PC-3 (cell line): ENCODE measurements at regions of chr7 and their contacts with region 1.

Region 1: DNA sequence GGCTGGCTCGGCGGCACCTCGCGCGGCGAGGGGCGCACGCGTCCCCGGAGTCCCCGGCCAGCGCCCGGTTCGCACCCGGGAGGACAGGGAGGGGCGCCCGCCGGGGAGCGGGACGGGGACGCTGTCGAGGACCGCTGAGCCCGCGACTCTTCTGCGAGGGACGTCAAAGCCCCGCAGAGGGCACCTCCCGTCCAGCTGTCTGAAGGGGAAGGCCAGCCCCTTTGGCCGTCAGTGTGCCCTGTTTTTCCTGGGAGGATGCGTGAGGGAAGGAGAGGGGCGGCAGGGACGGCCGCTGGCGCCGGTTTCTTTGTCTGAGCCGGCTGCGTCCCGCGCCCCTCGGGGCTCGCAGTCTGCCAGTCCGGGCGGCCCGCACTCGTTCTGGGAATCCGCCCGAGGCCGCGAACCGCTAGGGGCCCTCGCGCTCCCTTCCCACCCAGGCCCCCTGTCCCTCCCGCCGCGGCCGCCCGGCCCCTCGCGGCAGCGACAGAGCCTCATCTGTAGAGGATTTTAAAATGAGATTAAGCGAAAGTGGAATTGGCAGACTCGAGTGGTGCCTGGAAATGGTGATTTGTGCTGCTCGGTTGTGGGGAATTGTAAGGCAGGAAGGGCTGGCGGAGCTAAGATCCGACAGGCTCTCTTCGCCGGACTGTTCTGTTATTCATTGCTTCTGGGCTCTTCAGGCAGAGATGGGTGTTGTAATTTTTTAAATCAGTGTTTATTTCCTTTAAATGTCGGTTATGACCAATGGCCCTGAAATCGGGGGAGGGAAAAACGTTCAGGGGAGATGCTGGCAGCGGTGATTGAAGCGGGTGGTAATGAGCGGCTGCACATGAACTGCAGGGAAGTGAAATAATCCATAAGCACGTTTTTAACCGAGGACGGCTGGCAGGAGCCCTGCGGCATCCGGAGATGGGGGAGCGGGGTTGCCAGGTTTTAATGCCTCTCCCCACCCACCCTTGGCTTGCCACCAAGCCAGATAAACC is 618 bp upstream of the RELN start:
- DNase-seq: peak; percentile 11
- ATAC-seq: peak; percentile 50
- H3K4me3 ChIP-seq: peak overlapping the region; percentile 67
- H3K27ac ChIP-seq: no peak overlapping the region
- H3K4me1 ChIP-seq: no peaks in the 10 kb centered on the region
- H3K27me3 ChIP-seq: peaks cover 43% of the 10 kb centered on the region
- CTCF ChIP-seq: peak; percentile 21; the same call in 1 of the 2 replicates

Region 2: DNA sequence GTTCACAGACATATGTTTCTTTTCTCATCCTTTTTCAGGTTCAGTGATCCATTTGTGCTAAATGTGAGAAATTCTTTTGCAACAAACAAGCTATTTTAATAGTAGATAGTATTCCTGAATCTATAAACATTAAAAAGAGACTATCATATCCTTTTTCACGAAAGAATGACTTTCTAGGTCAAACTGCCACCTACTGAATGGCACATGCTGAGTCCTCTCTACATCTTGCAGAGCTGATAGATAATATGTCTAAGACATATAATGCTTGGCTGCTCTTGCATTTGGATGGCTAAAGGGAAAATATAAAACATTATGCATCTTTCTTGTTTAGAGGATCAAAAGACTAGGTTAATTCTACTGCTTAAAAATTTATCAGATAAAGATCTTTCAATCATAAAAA is 429.9 kb before region 1 on chr7:
- CTCF ChIA-PET with region 1: no interaction called
- POLR2A ChIA-PET with region 1: no interaction called
- intact Hi-C with region 1: no loop called
- DNase-seq: no peak
- ATAC-seq: no peak
- H3K4me3 ChIP-seq: no peak overlapping the region
- H3K27ac ChIP-seq: no peak overlapping the region
- H3K4me1 ChIP-seq: no peaks in the 10 kb centered on the region
- H3K27me3 ChIP-seq: no peaks in the 10 kb centered on the region
- CTCF ChIP-seq: no peak

Region 3: GRCh38 chr7:103866919-103867318 is 123.2 kb before region 1 on chr7:
- CTCF ChIA-PET with region 1: no interaction called
- POLR2A ChIA-PET with region 1: no interaction called
- intact Hi-C with region 1: loop called (anchors 10 kb)
- DNase-seq: peak; percentile 7
- ATAC-seq: peak; percentile 81
- H3K4me3 ChIP-seq: no peak overlapping the region
- H3K27ac ChIP-seq: no peak overlapping the region
- H3K4me1 ChIP-seq: no peaks in the 10 kb centered on the region
- H3K27me3 ChIP-seq: peaks cover 22% of the 10 kb centered on the region; the same call in 1 of the 2 replicates
- CTCF ChIP-seq: no peak

Region 4: GRCh38 chr7:103951311-103951710 is 38.8 kb before region 1 on chr7:
- CTCF ChIA-PET with region 1: no interaction called
- POLR2A ChIA-PET with region 1: no interaction called
- intact Hi-C with region 1: no loop called
- DNase-seq: no peak
- ATAC-seq: no peak
- H3K4me3 ChIP-seq: no peak overlapping the region
- H3K27ac ChIP-seq: no peak overlapping the region
- H3K4me1 ChIP-seq: no peaks in the 10 kb centered on the region
- H3K27me3 ChIP-seq: peaks cover 15% of the 10 kb centered on the region
- CTCF ChIP-seq: no peak

Region 5: DNA sequence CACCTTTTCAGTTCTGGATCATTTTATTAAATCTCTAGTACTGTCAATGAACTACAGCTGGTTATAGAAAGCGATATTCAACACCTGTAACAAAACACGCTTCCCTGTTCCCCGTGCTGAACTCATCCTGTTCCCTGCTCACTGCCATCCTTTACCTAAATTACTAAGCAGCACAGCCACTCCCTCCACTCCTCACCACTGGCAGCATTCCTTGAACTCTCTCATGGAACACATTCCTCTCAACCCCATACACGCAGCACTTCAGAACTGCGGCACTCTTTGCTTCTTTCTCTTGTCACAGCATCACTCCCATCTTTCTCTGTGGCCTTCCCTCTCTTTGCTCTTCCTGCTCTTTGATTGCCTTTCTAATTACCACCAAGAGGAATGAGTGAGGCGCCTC is 28.0 kb before region 1 on chr7:
- CTCF ChIA-PET with region 1: no interaction called
- POLR2A ChIA-PET with region 1: interaction called, 12 read pairs
- intact Hi-C with region 1: no loop called
- DNase-seq: no peak
- ATAC-seq: no peak
- H3K4me3 ChIP-seq: no peak overlapping the region
- H3K27ac ChIP-seq: no peak overlapping the region
- H3K4me1 ChIP-seq: no peaks in the 10 kb centered on the region
- H3K27me3 ChIP-seq: peaks cover 12% of the 10 kb centered on the region; the same call in 1 of the 2 replicates
- CTCF ChIP-seq: no peak

Region 6: GRCh38 chr7:104096683-104097082 is 106.6 kb after region 1 on chr7:
- CTCF ChIA-PET with region 1: no interaction called
- POLR2A ChIA-PET with region 1: no interaction called
- intact Hi-C with region 1: loop called (anchors 5 kb)
- DNase-seq: peak; percentile 63
- ATAC-seq: peak; percentile 93
- H3K4me3 ChIP-seq: no peak overlapping the region
- H3K27ac ChIP-seq: no peak overlapping the region
- H3K4me1 ChIP-seq: no peaks in the 10 kb centered on the region
- H3K27me3 ChIP-seq: no peaks in the 10 kb centered on the region
- CTCF ChIP-seq: peak; percentile 54

Region 7: DNA sequence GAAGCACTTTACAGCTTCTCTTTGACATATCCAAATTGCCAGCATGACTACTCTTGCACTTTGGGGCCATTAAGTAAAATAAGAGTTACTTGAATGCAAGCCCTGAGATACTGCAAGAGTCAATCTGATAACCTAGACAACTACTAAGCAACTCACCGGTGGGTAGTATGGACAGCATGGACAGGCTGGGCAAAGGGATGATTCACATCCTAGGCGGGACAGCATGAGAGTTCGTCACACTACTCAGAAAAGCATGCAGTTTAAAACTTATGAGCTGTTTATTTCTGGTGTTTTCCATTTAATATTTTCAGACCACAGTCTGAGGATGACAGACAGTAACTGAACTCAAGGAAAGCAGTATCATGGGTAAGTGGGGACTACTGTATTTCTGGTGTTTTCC is 133.7 kb after region 1 on chr7:
- CTCF ChIA-PET with region 1: no interaction called
- POLR2A ChIA-PET with region 1: no interaction called
- intact Hi-C with region 1: no loop called
- DNase-seq: peak; percentile 41
- ATAC-seq: peak; percentile 99
- H3K4me3 ChIP-seq: no peak overlapping the region
- H3K27ac ChIP-seq: no peak overlapping the region
- H3K4me1 ChIP-seq: no peaks in the 10 kb centered on the region; the same call in 1 of the 2 replicates
- H3K27me3 ChIP-seq: no peaks in the 10 kb centered on the region
- CTCF ChIP-seq: no peak

Region 8: DNA sequence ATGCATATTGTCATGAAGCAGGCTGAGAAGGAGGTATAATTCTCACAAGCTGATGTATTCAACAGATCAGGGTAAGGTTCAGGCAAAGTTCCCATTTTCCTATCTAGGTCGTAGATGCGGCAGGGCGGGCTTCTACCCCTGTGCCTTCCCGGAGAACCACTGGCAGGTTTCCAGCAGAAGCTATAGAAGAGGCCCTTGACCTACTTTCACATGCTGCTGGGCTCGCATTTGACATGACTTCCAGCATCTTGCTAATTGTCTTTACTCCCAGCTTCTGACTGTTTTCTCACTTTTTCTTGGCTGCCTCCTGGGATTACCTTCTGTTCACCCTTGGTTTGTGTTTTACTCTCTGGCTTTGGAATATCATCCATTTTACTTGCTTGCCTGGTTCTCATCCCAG is 250.3 kb after region 1 on chr7:
- CTCF ChIA-PET with region 1: no interaction called
- POLR2A ChIA-PET with region 1: no interaction called
- intact Hi-C with region 1: no loop called
- DNase-seq: no peak
- ATAC-seq: no peak
- H3K4me3 ChIP-seq: no peak overlapping the region
- H3K27ac ChIP-seq: no peak overlapping the region
- H3K4me1 ChIP-seq: no peaks in the 10 kb centered on the region
- H3K27me3 ChIP-seq: peaks cover 25% of the 10 kb centered on the region; the same call in 1 of the 2 replicates
- CTCF ChIP-seq: no peak